Activated T-helper 2 cell treated with anti-CD3 and anti-CD28 coated beads, Interferon-gamma antibody, Interleukin-2, Interleukin-4, amounts not matched to agents 10 μg/mL and 5 μg/mL and 100 μg/mL, durations not matched to agents 14 hours and 24 hours and 36 hours (primary cell): ENCODE measurements at regions of chr6 and their contacts with region 1.

Region 1: GRCh38 chr6:137218917-137219663 is at the start of gene IFNGR1:
- DNase-seq: peak; percentile 93
- H3K4me3 Mint-ChIP-seq: peak within 1 kb of the TSS; percentile 98
- H3K27ac Mint-ChIP-seq: peak within 1 kb of the TSS; percentile 99
- H3K4me1 Mint-ChIP-seq: peaks cover 51% of the 10 kb centered on the region
- H3K27me3 Mint-ChIP-seq: no peaks in the 10 kb centered on the region
- total RNA-seq, gene IFNGR1: 22.2 and 26.2 TPM in 2 replicates

Region 2: GRCh38 chr6:137033828-137034227 is 185.3 kb before region 1 on chr6:
- intact Hi-C with region 1: loop called (anchors 5 kb)
- DNase-seq: peak; percentile 67
- H3K4me3 Mint-ChIP-seq: no peak overlapping the region
- H3K27ac Mint-ChIP-seq: peak overlapping the region; percentile 35
- H3K4me1 Mint-ChIP-seq: peaks cover 16% of the 10 kb centered on the region
- H3K27me3 Mint-ChIP-seq: peaks cover 73% of the 10 kb centered on the region

Region 3: DNA sequence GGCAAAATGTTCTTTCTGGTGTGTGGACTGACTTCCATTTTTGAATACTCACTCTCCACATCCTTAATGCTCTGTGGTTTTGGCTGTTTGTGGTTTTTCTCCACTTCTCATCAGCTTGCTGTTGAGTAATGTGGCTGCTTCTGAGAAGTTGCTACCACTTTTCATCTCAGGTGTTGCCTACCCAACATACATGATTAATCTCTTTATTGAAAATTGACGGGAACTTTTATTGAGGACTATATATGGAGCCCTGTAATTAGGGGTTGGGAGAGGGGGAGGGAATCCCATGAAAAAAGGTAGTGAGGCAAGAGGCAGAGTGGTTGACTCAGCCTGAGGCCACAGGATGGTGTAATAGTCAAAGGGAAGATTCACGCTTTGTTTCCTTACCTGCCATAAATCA is 63.3 kb before region 1 on chr6:
- intact Hi-C with region 1: loop called (anchors 5 kb)
- DNase-seq: peak; percentile 44
- H3K4me3 Mint-ChIP-seq: peak overlapping the region; percentile 28
- H3K27ac Mint-ChIP-seq: peak overlapping the region; percentile 15
- H3K4me1 Mint-ChIP-seq: peaks cover 19% of the 10 kb centered on the region
- H3K27me3 Mint-ChIP-seq: peaks cover 12% of the 10 kb centered on the region

Region 4: DNA sequence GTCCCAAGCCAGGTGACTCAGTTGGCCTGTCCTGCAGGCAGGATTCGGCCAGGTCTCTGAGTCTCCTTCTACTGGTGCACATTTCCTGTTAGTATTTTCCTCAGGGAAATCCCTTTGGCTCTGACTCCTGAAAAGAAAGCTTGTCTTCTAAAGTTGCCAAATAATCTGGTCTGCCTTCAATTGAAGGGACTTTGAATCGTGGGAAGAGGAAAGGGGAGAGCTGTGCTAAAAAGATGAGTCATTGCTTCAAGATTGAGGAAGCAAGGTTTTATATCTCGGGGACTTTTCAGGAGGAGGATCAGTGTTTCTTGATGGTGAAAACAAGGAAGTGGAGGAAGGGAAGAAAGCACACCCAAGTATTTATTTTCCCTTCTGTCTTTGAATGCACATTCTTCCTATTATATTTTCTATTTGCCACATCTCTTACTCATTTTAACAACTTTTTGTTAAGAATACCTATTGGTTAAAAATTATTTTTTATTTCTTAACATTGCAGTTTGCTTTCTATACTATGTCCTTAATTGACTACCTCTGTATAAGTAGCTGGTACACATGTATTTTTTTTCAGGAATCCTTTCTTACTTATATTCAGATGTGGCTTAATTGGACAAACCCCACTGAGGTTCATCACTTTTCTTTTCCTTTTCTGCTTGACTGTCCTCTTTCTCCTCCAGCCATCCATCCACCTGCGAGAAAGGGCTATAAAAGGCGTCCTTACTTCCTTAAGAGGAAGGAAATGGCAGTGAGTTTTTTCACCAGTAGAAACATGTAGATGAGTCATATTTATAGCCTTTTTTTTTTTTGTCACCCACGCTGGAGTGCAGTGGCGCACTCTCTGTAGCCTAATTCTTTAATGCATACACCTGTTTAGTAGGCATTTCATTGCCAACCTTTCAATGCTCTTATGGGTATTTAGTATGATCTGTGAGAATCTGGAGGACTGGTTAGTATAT is 15.1 kb after region 1 on chr6:
- intact Hi-C with region 1: loop called (anchors 2 kb)
- DNase-seq: no peak
- H3K4me3 Mint-ChIP-seq: peak overlapping the region; percentile 14
- H3K27ac Mint-ChIP-seq: no peak overlapping the region
- H3K4me1 Mint-ChIP-seq: peaks cover 43% of the 10 kb centered on the region
- H3K27me3 Mint-ChIP-seq: peaks cover 4% of the 10 kb centered on the region

Region 5: GRCh38 chr6:137975188-137975940 is 756.3 kb after region 1 on chr6:
- intact Hi-C with region 1: loop called (anchors 10 kb)
- DNase-seq: peak; percentile 26
- H3K4me3 Mint-ChIP-seq: peak overlapping the region; percentile 72
- H3K27ac Mint-ChIP-seq: peak overlapping the region; percentile 93
- H3K4me1 Mint-ChIP-seq: peaks cover 57% of the 10 kb centered on the region
- H3K27me3 Mint-ChIP-seq: no peaks in the 10 kb centered on the region